Activated CD8-positive, alpha-beta memory T cell treated with anti-CD3 and anti-CD28 coated beads, Interleukin-2, amount 10 ng/mL, durations not matched to agents 7 days and 5 days (primary cell): ENCODE measurements at regions of chr6 and their contacts with region 1.

Region 1: GRCh38 chr6:30769088-30769852 is 24.9 kb upstream of the IER3 start:
- DNase-seq: peak; percentile 85
- ATAC-seq: peak; percentile 70
- H3K4me3 Mint-ChIP-seq: peak overlapping the region; percentile 18
- H3K27ac Mint-ChIP-seq: peak overlapping the region; percentile 89
- H3K4me1 Mint-ChIP-seq: peaks cover 70% of the 10 kb centered on the region
- H3K27me3 Mint-ChIP-seq: no peaks in the 10 kb centered on the region

Region 2: GRCh38 chr6:30742316-30743098 is 26.8 kb before region 1 on chr6 and contains the start of gene FLOT1:
- CTCF ChIA-PET with region 1: interaction called, 30 read pairs
- DNase-seq: peak; percentile 96
- ATAC-seq: peak; percentile 84
- H3K4me3 Mint-ChIP-seq: peak within 1 kb of the TSS; percentile 95
- H3K27ac Mint-ChIP-seq: peak within 1 kb of the TSS; percentile 83
- H3K4me1 Mint-ChIP-seq: peaks cover 59% of the 10 kb centered on the region
- H3K27me3 Mint-ChIP-seq: no peaks in the 10 kb centered on the region
- total RNA-seq, gene FLOT1: 165 to 184 TPM